PC-9 (cell line): ENCODE measurements at regions of chr11 and their contacts with region 1.

Region 1: DNA sequence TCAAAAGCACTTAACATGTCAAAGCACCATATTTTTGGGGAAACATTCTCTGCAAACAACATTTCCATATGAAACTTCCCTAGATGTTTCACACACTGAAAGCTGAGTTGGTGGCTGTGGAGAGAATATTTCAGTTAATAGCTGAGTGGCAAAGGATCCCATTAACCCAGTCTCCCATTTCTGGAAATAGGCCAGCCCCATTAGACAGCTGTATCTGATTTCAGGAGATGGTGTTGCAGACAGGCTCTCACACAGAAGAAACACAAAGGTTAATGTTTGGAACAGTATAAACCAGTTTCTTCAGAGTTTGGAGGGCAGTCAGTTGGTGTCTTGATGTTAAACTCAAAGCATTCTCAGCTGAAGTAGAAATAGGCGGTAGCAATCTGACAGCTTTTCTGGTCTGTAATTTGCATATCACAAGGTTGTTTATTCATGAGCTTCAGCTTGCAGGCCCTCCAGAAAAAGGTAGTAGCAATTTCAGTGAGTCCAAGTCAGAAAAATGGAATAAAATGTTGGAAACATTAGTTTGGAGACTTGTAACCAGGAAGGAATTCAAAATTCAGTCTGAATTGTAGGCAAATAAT is 15.5 kb upstream of the ZBTB44 start:
- DNase-seq: no peak
- H3K4me3 ChIP-seq: no peak overlapping the region
- H3K27ac ChIP-seq: no peak overlapping the region
- H3K4me1 ChIP-seq: no peaks in the 10 kb centered on the region
- H3K27me3 ChIP-seq: no peaks in the 10 kb centered on the region
- CTCF ChIP-seq: no peak

Region 2: DNA sequence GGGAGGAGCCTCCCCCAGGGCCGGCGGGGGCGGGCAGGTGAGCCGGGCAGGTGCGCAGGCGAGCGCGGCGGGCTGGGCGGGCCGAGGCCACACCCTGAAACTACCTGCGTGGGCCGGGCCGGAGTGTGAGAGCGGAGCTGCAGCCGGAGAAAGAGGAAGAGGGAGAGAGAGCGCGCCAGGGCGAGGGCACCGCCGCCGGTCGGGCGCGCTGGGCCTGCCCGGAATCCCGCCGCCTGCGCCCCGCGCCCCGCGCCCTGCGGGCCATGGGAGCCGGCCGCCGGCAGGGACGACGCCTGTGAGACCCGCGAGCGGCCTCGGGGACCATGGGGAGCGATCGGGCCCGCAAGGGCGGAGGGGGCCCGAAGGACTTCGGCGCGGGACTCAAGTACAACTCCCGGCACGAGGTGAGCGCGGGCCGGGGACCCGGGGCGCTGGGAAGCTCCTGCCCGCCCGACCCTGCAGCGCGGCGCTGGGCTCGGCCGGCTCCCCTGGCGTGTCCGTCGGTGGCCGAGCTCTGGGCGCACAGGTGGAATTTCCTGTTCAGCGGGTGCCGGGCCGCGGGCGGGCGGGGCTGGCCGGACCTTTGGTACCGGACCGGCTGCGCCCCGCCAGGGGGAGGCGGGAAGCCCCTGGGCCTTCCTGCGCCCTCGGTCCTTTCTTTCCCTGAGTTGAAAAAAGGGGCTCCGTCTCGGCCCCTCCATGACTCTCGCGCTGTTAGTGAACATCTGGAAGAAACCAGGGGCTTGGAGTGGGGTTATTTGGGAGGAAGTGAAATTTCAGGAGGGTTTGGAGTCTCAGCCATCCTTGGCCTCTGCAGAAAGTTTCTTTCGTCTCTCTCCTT is 170.3 kb before region 1 on chr11 and contains the start of gene ST14:
- CTCF ChIA-PET with region 1: interaction called, 10 read pairs
- POLR2A ChIA-PET with region 1: no interaction called
- intact Hi-C with region 1: no loop called
- DNase-seq: peak; percentile 63 to 76
- H3K4me3 ChIP-seq: peak within 1 kb of the TSS; percentile 100
- H3K27ac ChIP-seq: peak within 1 kb of the TSS; percentile 75
- H3K4me1 ChIP-seq: peaks cover 58% of the 10 kb centered on the region
- H3K27me3 ChIP-seq: no peaks in the 10 kb centered on the region
- CTCF ChIP-seq: no peak
- total RNA-seq, gene ST14: 139 and 141 TPM in 2 replicates